Mammary epithelial cell (primary cell): ENCODE measurements at regions of chr6 and their contacts with region 1.

Region 1: DNA sequence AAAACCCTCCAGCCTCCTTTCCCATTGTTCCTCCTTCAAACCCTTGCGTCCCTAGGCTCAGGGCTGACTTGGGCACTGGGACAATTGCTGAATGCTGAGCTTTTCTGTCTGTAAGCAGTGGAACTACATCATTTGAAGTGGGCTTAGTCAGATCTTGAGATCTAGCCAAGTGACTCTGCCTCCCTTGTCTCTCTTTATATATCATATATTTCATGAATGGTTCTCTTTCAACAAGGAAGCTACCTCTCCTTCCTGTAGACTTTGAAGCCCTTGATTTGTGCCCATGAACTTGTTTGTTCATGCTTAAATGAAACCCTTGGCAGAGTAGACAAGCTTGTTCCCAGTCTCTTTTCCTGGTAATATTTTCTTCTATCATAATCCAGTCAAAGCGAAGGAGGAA is 60.0 kb upstream of the KIF13A start:
- DNase-seq: peak; percentile 89
- H3K4me3 ChIP-seq: no peak overlapping the region
- H3K27ac ChIP-seq: peak overlapping the region; percentile 77
- H3K4me1 ChIP-seq: peaks cover 27% of the 10 kb centered on the region
- H3K27me3 ChIP-seq: no peaks in the 10 kb centered on the region
- CTCF ChIP-seq: no peak

Region 2: GRCh38 chr6:17790489-17790888 is 256.9 kb before region 1 on chr6:
- CTCF ChIA-PET with region 1: no interaction called
- dilution Hi-C with region 1: no loop called
- in situ Hi-C with region 1: no loop called
- intact Hi-C with region 1: no loop called
- DNase-seq: no peak
- H3K4me3 ChIP-seq: no peak overlapping the region
- H3K27ac ChIP-seq: no peak overlapping the region
- H3K4me1 ChIP-seq: no peaks in the 10 kb centered on the region
- H3K27me3 ChIP-seq: no peaks in the 10 kb centered on the region
- CTCF ChIP-seq: no peak

Region 3: DNA sequence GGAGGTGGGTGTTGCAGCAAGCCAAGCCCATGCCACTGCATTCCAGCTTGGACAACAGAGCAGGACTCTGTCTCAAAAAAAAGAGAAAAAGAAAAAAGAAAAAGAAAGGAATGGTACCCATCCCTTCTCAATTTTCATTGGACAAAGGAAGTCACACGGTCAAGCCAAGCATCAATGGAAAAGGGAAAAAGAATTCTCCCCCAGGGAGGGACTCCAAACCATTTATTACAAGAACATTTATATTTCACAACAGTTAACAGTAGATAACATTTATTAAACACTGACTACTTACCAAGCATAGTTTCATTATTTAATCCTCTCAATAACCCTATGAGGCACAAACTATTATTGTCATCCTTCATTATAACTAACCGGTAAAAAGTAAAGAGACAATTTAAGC is 53.4 kb before region 1 on chr6:
- CTCF ChIA-PET with region 1: no interaction called
- dilution Hi-C with region 1: loop called (anchors 5 kb)
- in situ Hi-C with region 1: loop called in 1 of 2 experiments (anchors 10 kb)
- intact Hi-C with region 1: no loop called
- DNase-seq: no peak
- H3K4me3 ChIP-seq: no peak overlapping the region
- H3K27ac ChIP-seq: peak overlapping the region; percentile 77
- H3K4me1 ChIP-seq: peaks cover 30% of the 10 kb centered on the region
- H3K27me3 ChIP-seq: no peaks in the 10 kb centered on the region
- CTCF ChIP-seq: no peak